PC-9 (cell line): ENCODE measurements at regions of chr15 and their contacts with region 1.

Region 1: GRCh38 chr15:23052511-23052910 is 13.1 kb upstream of the TUBGCP5 start:
- DNase-seq: no peak
- H3K4me3 ChIP-seq: no peak overlapping the region
- H3K27ac ChIP-seq: no peak overlapping the region
- H3K4me1 ChIP-seq: no peaks in the 10 kb centered on the region
- H3K27me3 ChIP-seq: peaks cover 17% of the 10 kb centered on the region
- CTCF ChIP-seq: no peak

Region 2: DNA sequence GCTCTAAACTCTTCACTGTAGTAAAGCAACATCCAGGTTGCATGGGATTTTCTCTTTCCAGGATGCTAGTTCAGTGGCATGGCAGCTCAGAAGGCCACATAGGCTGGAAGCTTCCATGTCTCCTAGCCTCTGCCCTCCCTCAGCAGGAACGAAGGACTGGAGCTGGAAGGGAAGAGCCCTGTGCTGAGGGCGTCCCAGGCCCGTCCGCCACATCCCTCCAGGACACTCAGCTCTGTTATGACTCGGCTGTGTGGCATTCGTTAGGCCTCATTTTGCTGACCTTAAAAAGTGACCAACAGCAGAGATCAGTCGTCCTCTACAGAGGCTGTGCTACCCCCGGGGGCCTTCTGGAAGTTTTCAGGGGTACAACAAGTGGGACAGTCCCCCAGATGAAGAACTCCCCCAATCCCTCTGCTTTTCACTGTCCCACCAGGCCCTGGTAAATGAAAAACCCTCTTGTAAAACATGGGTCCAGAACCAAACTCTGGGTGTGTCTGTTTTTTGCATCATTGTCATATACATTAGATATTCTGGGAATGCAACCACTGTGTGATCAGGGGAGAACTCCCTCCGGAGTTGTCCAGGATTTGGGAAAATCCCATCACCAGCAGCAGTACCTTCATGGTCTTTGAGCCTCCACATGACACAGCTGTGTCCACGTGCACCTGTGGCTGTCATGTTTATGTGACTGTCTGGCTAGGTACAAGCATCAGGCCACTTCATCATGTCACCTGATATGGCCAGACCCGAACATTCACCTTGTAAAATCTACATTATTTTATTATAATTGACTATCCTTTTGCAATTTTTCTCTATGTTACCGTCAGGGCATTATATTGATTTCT is 822.3 kb before region 1 on chr15:
- CTCF ChIA-PET with region 1: interaction called, 12 read pairs
- POLR2A ChIA-PET with region 1: no interaction called
- intact Hi-C with region 1: no loop called
- DNase-seq: no peak
- H3K4me3 ChIP-seq: no peak overlapping the region
- H3K27ac ChIP-seq: no peak overlapping the region
- H3K4me1 ChIP-seq: no peaks in the 10 kb centered on the region
- H3K27me3 ChIP-seq: peaks cover 41% of the 10 kb centered on the region
- CTCF ChIP-seq: no peak

Region 3: GRCh38 chr15:22989576-22990477 is 62.7 kb before region 1 on chr15:
- CTCF ChIA-PET with region 1: no interaction called
- POLR2A ChIA-PET with region 1: no interaction called
- intact Hi-C with region 1: no loop called
- DNase-seq: no peak
- H3K4me3 ChIP-seq: no peak overlapping the region
- H3K27ac ChIP-seq: no peak overlapping the region
- H3K4me1 ChIP-seq: no peaks in the 10 kb centered on the region
- H3K27me3 ChIP-seq: no peaks in the 10 kb centered on the region
- CTCF ChIP-seq: no peak